Stomach (tissue), 19 donors: ENCODE measurements at regions of chr10 and their contacts with region 1.

Region 1: GRCh38 chr10:70920565-70920964 is 32.2 kb upstream of the PCBD1 start:
- DNase-seq: peak; percentile 59 to 76
- H3K4me3 ChIP-seq: no peak overlapping the region
- H3K27ac ChIP-seq: no peak overlapping the region
- H3K4me1 ChIP-seq: peaks cover 0 to 2% (median under 1%) of the 10 kb centered on the region in 4 donors
- H3K27me3 ChIP-seq: peaks cover 0 to 38% (median 7%) of the 10 kb centered on the region in 3 donors
- CTCF ChIP-seq: no peak
- EP300 ChIP-seq: no peak
- POLR2A ChIP-seq: no peak

Region 2: GRCh38 chr10:70880077-70880534 is 40.5 kb before region 1 on chr10:
- intact Hi-C with region 1: no loop called
- DNase-seq: peak; percentile 83 to 93
- H3K4me3 ChIP-seq: no peak overlapping the region
- H3K27ac ChIP-seq: no peak overlapping the region
- H3K4me1 ChIP-seq: peaks cover 0 to 17% (median 0%) of the 10 kb centered on the region in 4 donors
- H3K27me3 ChIP-seq: no peaks in the 10 kb centered on the region
- CTCF ChIP-seq: peak in 6 of 7 experiments; percentile 63 to 94 (median 89)
- EP300 ChIP-seq: no peak
- POLR2A ChIP-seq: no peak

Region 3: GRCh38 chr10:71025535-71025934 is 105.0 kb after region 1 on chr10:
- intact Hi-C with region 1: no loop called
- DNase-seq: no peak
- H3K4me3 ChIP-seq: no peak overlapping the region
- H3K27ac ChIP-seq: no peak overlapping the region
- H3K4me1 ChIP-seq: no peaks in the 10 kb centered on the region
- H3K27me3 ChIP-seq: peaks cover 0 to 18% (median 0%) of the 10 kb centered on the region in 3 donors
- CTCF ChIP-seq: no peak
- EP300 ChIP-seq: no peak
- POLR2A ChIP-seq: no peak

Region 4: DNA sequence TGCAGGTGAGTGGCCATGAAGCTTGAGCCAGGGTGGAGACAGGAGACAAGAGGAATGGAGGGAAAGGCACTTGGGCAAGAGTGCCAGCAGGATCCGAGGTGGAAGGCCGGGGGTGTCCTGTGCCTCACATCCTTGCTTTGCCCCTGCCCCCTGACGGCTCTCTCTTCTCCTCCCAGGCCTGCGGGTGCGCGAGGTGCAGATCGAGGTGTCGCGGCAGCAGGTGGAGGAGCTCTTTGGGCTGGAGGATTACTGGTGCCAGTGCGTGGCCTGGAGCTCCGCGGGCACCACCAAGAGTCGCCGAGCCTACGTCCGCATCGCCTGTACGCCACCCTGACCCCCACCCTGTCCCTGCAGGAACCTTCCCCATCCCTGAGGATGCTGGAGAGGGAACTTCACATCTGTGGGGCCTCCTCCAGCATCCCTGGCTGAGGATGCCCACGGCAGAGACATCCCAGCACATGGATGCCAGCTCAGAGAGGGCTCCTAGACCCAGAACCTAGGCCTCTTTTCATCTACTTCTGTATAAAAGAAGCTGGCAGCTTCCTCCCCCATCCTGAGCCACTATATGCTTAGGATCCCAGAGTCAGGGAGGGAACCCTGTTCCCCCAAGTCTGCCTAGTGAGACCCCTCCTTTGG is 364.1 kb after region 1 on chr10:
- intact Hi-C with region 1: loop called (anchors 5 kb)
- DNase-seq: no peak
- H3K4me3 ChIP-seq: no peak overlapping the region
- H3K27ac ChIP-seq: no peak overlapping the region
- H3K4me1 ChIP-seq: no peaks in the 10 kb centered on the region
- H3K27me3 ChIP-seq: no peaks in the 10 kb centered on the region
- CTCF ChIP-seq: no peak
- EP300 ChIP-seq: no peak
- POLR2A ChIP-seq: no peak